ENCODE measurements at regions of chr9 and their contacts with region 1.

Region 1: GRCh38 chr9:130693426-130694191 is at the start of gene EXOSC2:
- DNase-seq: peak; percentile 93 to 99 (median 94)
- ATAC-seq: peak; percentile 94
- H3K4me3 ChIP-seq: peak within 1 kb of the TSS; percentile 81
- H3K27ac ChIP-seq: peak within 1 kb of the TSS; percentile 84
- H3K4me1 ChIP-seq: peaks cover 9 to 12% of the 10 kb centered on the region in 2 experiments; a peak in 4 of 5 replicates
- H3K27me3 ChIP-seq: no peaks in the 10 kb centered on the region
- CTCF ChIP-seq: no peak
- EP300 ChIP-seq: no peak
- POLR2A ChIP-seq: peak; percentile 97
- RAD21 ChIP-seq: no peak
- polyA plus RNA-seq, gene EXOSC2: 46.0 to 89.0 TPM

Region 2: GRCh38 chr9:130128733-130129431 is 564.7 kb before region 1 on chr9:
- CTCF ChIA-PET with region 1: no interaction called
- POLR2A ChIA-PET with region 1: no interaction called
- in situ Hi-C with region 1: loop called (anchors 25 kb)
- intact Hi-C with region 1: no loop called
- DNase-seq: peak in 1 of 4 experiments; percentile 37
- ATAC-seq: no peak; the same call in 2 of the 3 replicates
- H3K4me3 ChIP-seq: no peak overlapping the region
- H3K27ac ChIP-seq: peak overlapping the region; percentile 14; the same call in 1 of the 3 replicates
- H3K4me1 ChIP-seq: peaks cover 8% of the 10 kb centered on the region in 2 experiments; a peak in 4 of 5 replicates
- H3K27me3 ChIP-seq: no peaks in the 10 kb centered on the region
- CTCF ChIP-seq: no peak
- EP300 ChIP-seq: no peak
- POLR2A ChIP-seq: no peak
- RAD21 ChIP-seq: no peak

Region 3: GRCh38 chr9:130451509-130452388 is 241.9 kb before region 1 on chr9:
- CTCF ChIA-PET with region 1: no interaction called
- POLR2A ChIA-PET with region 1: interaction called, 5 read pairs
- in situ Hi-C with region 1: loop called (anchors 5 kb)
- intact Hi-C with region 1: no loop called
- DNase-seq: peak; percentile 67 to 74 (median 72)
- ATAC-seq: peak; percentile 67
- H3K4me3 ChIP-seq: no peak overlapping the region
- H3K27ac ChIP-seq: no peak overlapping the region
- H3K4me1 ChIP-seq: peaks cover 19 to 36% of the 10 kb centered on the region in 2 experiments
- H3K27me3 ChIP-seq: no peaks in the 10 kb centered on the region; a peak in 1 of 5 replicates
- CTCF ChIP-seq: peak; percentile 32 to 65 (median 35)
- EP300 ChIP-seq: no peak
- POLR2A ChIP-seq: no peak
- RAD21 ChIP-seq: peak in 1 of 2 experiments; percentile 39; a peak in 2 of 4 replicates

Region 4: GRCh38 chr9:130824643-130825350 is 131.2 kb after region 1 on chr9:
- CTCF ChIA-PET with region 1: no interaction called
- POLR2A ChIA-PET with region 1: no interaction called
- in situ Hi-C with region 1: no loop called
- intact Hi-C with region 1: no loop called
- DNase-seq: peak; percentile 80 to 91 (median 88)
- ATAC-seq: peak; percentile 89
- H3K4me3 ChIP-seq: no peak overlapping the region
- H3K27ac ChIP-seq: peak overlapping the region; percentile 29; the same call in 2 of the 3 replicates
- H3K4me1 ChIP-seq: peaks cover 15 to 20% of the 10 kb centered on the region in 2 experiments
- H3K27me3 ChIP-seq: no peaks in the 10 kb centered on the region
- CTCF ChIP-seq: no peak
- EP300 ChIP-seq: no peak
- POLR2A ChIP-seq: no peak
- RAD21 ChIP-seq: no peak